ENCODE measurements at regions of chr4 and their contacts with region 1.

Region 1: DNA sequence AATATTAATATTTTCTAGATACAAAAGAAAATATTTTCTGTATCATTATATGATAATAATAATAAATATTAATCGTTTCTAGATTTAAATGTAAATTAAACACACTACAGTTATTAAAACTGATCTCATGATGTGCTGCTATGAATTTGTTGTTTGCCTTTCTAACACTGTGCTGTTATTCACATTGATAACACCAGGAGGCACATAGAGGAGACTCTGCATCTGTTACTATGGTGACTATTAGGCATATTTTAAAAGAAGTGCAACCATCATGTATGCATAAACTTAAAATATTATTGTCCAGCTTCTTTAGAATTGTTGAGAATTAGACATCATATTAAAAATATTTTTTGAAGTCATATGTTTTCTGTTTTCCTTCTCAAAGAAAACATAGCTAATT is 11.8 kb upstream of the PDGFC start:
- DNase-seq: no peak
- H3K4me3 ChIP-seq: no peak overlapping the region
- CTCF ChIP-seq: peak; percentile 45

Region 2: DNA sequence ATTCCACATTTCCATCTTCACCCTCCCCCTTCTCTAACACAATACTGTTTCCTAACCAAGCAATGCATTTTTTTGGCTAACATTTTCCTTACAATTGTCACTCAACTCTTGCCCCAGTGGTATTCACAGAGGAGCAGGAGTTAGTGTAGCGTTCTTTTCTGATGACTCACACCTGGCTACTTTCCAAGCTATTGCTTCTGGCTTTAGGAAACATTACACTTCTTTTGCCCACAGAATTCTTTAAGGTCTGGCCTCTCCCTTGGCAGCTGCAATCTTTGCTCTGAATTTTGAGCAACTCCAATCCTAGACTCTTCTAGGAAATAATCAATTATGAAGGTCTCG is 15.8 kb after region 1 on chr4:
- CTCF ChIA-PET with region 1: interaction called, 14 read pairs
- POLR2A ChIA-PET with region 1: no interaction called
- DNase-seq: peak; percentile 94
- H3K4me3 ChIP-seq: no peak overlapping the region
- CTCF ChIP-seq: no peak

Measured in AG04449 (cell line).